GM12878 (cell line): ENCODE measurements at regions of chr7 and their contacts with region 1.

Region 1: GRCh38 chr7:2465928-2466327 is 10.3 kb downstream of the GRIFIN start:
- DNase-seq: no peak
- ATAC-seq: no peak
- H3K4me3 ChIP-seq: no peak overlapping the region
- H3K27ac ChIP-seq: no peak overlapping the region
- H3K4me1 ChIP-seq: no peaks in the 10 kb centered on the region
- H3K27me3 ChIP-seq: no peaks in the 10 kb centered on the region
- CTCF ChIP-seq: no peak
- EP300 ChIP-seq: no peak
- POLR2A ChIP-seq: no peak
- RAD21 ChIP-seq: no peak

Region 2: DNA sequence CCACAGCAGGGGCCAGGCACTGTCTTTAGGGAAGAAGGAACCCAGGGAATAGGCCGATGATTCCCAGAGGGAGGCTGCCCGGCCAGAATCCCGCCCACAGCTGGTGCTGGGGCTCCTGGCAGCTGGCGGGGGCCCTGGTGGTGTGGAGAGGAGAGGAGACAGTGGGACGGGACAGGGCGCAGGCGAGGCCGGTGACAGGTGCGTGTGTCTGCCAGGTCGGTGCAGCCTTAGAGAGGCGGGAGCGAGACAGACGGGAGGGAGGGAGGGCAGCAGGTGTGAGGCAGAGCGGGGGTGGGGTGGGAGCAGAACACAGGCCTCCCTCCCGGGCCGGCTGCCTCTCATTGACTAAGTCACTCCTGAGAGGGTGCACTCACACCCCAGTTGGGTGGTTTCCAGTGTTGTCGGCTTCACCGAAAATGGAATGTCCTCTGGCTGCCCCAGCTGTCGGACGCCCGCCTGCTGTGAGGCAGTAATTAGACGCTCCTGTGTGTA is 740.7 kb before region 1 on chr7:
- CTCF ChIA-PET with region 1: no interaction called
- POLR2A ChIA-PET with region 1: no interaction called
- RAD21 ChIA-PET with region 1: no interaction called
- SMC1A ChIA-PET with region 1: no interaction called
- in situ Hi-C with region 1: no loop called
- intact Hi-C with region 1: no loop called
- DNase-seq: no peak
- ATAC-seq: no peak
- H3K4me3 ChIP-seq: no peak overlapping the region
- H3K27ac ChIP-seq: no peak overlapping the region
- H3K4me1 ChIP-seq: no peaks in the 10 kb centered on the region
- H3K27me3 ChIP-seq: no peaks in the 10 kb centered on the region
- CTCF ChIP-seq: no peak
- EP300 ChIP-seq: no peak
- POLR2A ChIP-seq: no peak
- RAD21 ChIP-seq: no peak

Region 3: GRCh38 chr7:2384354-2385243 is 81.3 kb before region 1 on chr7:
- CTCF ChIA-PET with region 1: interaction called, 13 read pairs
- POLR2A ChIA-PET with region 1: no interaction called
- RAD21 ChIA-PET with region 1: interaction called, 4 read pairs
- SMC1A ChIA-PET with region 1: interaction called, 5 read pairs
- in situ Hi-C with region 1: no loop called
- intact Hi-C with region 1: no loop called
- DNase-seq: no peak
- ATAC-seq: peak; percentile 22; the same call in 2 of the 3 replicates
- H3K4me3 ChIP-seq: no peak overlapping the region
- H3K27ac ChIP-seq: no peak overlapping the region
- H3K4me1 ChIP-seq: no peaks in the 10 kb centered on the region
- H3K27me3 ChIP-seq: no peaks in the 10 kb centered on the region
- CTCF ChIP-seq: peak in 2 of 3 experiments; percentile 15 to 23; a peak in 3 of 6 replicates
- EP300 ChIP-seq: no peak
- POLR2A ChIP-seq: no peak
- RAD21 ChIP-seq: 0 out of 2 replicates have a peak, but pooled peaks have one; percentile 5

Region 4: GRCh38 chr7:2567679-2568278 is 101.9 kb after region 1 on chr7:
- CTCF ChIA-PET with region 1: interaction called, 5 read pairs
- POLR2A ChIA-PET with region 1: interaction called, 9 read pairs
- RAD21 ChIA-PET with region 1: no interaction called
- SMC1A ChIA-PET with region 1: interaction called, 5 read pairs
- in situ Hi-C with region 1: no loop called
- intact Hi-C with region 1: loop called (anchors 5 kb)
- DNase-seq: no peak
- ATAC-seq: peak; percentile 69
- H3K4me3 ChIP-seq: 0 out of 2 replicates have a peak overlapping the region, but pooled peaks have one; percentile 54
- H3K27ac ChIP-seq: no peak overlapping the region
- H3K4me1 ChIP-seq: peaks cover 23% of the 10 kb centered on the region
- H3K27me3 ChIP-seq: no peaks in the 10 kb centered on the region
- CTCF ChIP-seq: peak; percentile 43 to 59 (median 55)
- EP300 ChIP-seq: no peak
- POLR2A ChIP-seq: no peak
- RAD21 ChIP-seq: peak; percentile 56